ENCODE measurements at regions of chr4 and their contacts with region 1.

Region 1: DNA sequence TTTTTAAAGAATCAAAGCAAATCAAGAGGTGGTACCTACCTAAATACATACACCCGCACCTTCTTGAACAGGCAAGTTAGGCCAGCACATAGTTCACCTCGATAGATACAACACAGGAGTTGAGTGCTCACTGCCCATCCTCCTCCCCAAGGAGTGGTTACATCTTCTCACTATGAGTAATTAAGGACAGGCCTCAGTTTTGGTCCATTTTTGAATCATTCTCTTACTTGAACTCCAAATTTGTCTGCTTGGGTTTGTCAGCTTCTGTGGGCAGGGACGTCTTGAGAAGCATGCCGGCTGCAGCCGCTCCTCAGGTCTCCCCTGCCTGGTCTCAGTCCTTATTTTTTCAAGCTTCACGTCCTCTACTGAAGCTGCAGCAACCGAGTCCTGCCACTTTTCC is 190.6 kb upstream of the RBPJ start:
- DNase-seq: peak; percentile 39
- ATAC-seq: peak; percentile 68
- H3K4me3 Mint-ChIP-seq: no peak overlapping the region
- H3K27ac Mint-ChIP-seq: peak overlapping the region; percentile 27
- H3K4me1 Mint-ChIP-seq: peaks cover 47% of the 10 kb centered on the region
- H3K27me3 Mint-ChIP-seq: peaks cover 2% of the 10 kb centered on the region

Region 2: DNA sequence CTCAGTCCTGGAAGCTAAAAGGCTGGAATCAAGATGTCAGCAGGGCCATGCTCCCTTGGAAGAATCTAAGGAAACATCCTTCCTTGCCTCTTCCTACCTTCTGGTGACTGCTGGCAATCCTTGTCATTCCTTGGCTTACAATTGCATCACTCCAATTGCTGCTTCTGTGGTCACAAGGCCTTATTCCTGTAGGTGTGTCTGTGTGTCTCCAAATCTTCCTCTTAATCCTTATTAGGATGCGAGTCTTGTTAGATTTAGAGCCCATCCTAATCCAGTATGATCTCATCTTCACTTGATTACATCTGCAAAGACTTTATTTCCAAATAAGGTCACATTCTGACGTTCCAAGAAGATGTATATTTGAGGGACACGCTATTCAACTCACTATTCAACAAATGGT is 164.0 kb before region 1 on chr4:
- CTCF ChIA-PET with region 1: no interaction called
- POLR2A ChIA-PET with region 1: no interaction called
- intact Hi-C with region 1: no loop called
- DNase-seq: no peak
- ATAC-seq: no peak
- H3K4me3 Mint-ChIP-seq: no peak overlapping the region
- H3K27ac Mint-ChIP-seq: no peak overlapping the region
- H3K4me1 Mint-ChIP-seq: no peaks in the 10 kb centered on the region
- H3K27me3 Mint-ChIP-seq: peaks cover 10% of the 10 kb centered on the region

Region 3: DNA sequence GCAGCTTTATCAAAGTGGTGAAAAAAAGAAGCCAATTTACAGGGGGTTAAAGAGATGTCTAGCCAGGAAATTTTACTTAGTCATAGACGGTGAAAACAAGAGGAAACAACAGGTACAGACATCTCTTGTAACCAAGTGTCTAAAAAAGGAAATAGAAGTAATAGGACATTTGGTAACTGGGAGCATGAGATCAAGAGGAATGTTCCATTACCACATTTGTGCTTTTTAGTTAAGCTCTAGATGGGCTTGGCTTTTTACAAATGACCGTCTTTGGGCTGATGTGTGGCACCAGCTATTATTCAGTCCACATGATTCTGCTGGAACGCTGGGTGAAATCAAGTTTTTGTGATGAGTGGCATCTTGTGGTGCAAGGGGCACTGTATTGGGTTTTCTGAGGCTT is 36.6 kb before region 1 on chr4:
- CTCF ChIA-PET with region 1: no interaction called
- POLR2A ChIA-PET with region 1: no interaction called
- intact Hi-C with region 1: loop called in 1 of 2 experiments (anchors 5 kb)
- DNase-seq: no peak
- ATAC-seq: no peak
- H3K4me3 Mint-ChIP-seq: no peak overlapping the region
- H3K27ac Mint-ChIP-seq: peak overlapping the region; percentile 23
- H3K4me1 Mint-ChIP-seq: peaks cover 24% of the 10 kb centered on the region
- H3K27me3 Mint-ChIP-seq: peaks cover 17% of the 10 kb centered on the region

Region 4: DNA sequence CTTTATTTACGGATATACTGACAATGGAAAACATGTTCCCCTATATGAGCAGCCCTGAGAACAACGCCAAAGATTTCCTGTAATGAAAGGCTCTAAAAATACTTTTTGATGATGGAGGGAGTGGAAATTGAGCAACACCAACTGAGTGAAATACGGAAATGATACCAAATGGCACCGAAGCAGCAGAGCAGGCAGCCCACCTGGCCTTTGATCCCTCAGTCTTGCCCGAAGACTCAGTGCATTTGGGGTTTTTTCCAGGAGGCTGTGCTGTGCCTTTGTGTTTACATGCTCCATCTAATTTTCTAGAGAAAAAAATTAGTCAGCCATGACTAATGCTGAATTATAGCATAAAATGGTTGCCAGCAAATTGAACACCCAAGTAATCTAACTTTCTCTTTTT is 20.8 kb after region 1 on chr4:
- CTCF ChIA-PET with region 1: no interaction called
- POLR2A ChIA-PET with region 1: no interaction called
- intact Hi-C with region 1: loop called in 1 of 2 experiments (anchors 1 kb)
- DNase-seq: peak; percentile 70
- ATAC-seq: peak; percentile 89
- H3K4me3 Mint-ChIP-seq: no peak overlapping the region
- H3K27ac Mint-ChIP-seq: peak overlapping the region; percentile 82
- H3K4me1 Mint-ChIP-seq: peaks cover 27% of the 10 kb centered on the region
- H3K27me3 Mint-ChIP-seq: peaks cover 7% of the 10 kb centered on the region

Region 5: DNA sequence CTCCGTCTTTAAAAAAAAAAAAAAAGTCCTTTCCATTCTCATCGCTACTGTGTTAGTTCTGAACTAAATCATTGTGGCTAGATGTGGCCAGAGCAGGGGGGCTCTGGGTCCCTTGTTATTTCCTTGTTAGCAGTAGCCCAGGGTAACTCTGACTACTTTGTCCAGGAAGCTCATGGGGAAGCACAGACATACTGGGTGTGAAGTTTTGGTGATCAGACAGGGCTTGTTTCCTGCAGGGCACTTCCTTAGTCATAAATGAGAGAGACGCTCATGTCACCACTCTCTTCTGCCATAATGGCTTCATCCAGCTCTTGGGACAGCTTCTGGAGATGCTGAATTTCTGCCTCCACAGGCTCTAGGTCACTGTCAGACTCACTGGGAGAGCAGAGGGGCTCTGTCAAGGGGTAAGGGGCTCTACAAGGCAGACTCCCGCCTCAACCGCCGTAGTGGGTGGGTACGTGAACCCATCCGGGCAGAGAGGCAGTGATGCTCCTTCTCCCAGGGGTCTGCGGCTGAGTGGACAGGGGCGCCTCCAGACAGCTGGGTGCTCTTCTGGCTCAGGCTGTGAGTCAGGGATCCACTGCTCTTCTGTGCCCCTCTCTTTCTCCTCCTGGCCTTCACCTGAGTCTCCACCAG is 743.3 kb after region 1 on chr4:
- CTCF ChIA-PET with region 1: no interaction called
- POLR2A ChIA-PET with region 1: no interaction called
- intact Hi-C with region 1: no loop called
- DNase-seq: peak; percentile 77
- ATAC-seq: peak; percentile 94
- H3K4me3 Mint-ChIP-seq: peak overlapping the region; percentile 4
- H3K27ac Mint-ChIP-seq: peak overlapping the region; percentile 83
- H3K4me1 Mint-ChIP-seq: peaks cover 80% of the 10 kb centered on the region
- H3K27me3 Mint-ChIP-seq: no peaks in the 10 kb centered on the region

Measured in activated CD4-positive, alpha-beta T cell treated with anti-CD3 and anti-CD28 coated beads for 36 hours (primary cell).